ENCODE measurements at regions of chr6 and their contacts with region 1.

Region 1: DNA sequence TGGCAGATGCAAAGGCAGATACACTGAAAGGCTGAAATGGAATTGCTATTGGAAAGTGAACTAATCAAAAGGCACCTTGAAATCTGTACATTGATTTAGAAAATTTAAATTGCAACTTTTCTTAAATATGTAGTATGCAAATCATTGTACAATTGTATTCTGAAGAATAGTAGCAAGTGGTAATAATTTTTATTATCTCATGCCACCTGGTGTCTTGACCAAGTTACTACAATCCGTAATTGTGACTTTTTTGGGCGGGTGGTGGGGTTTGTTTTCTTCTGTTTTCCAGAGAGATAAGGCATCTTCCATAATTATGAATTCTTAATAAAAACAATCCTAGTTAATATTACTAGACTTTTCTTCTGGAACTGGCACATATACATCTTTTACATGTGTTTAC is 12.5 kb upstream of the BCKDHB start:
- DNase-seq: peak in 1 of 2 donors; percentile 57
- ATAC-seq: peak in 2 of 3 donors; percentile 65 to 70
- H3K4me3 ChIP-seq: no peak overlapping the region
- H3K4me3 Mint-ChIP-seq: no peak overlapping the region
- H3K27ac ChIP-seq: no peak overlapping the region
- H3K27ac Mint-ChIP-seq: no peak overlapping the region
- H3K4me1 ChIP-seq: no peaks in the 10 kb centered on the region
- H3K4me1 Mint-ChIP-seq: no peaks in the 10 kb centered on the region
- H3K27me3 ChIP-seq: no peaks in the 10 kb centered on the region
- H3K27me3 Mint-ChIP-seq: peaks cover 18 to 19% of the 10 kb centered on the region in 2 donors
- CTCF ChIP-seq: peak; percentile 76

Region 2: GRCh38 chr6:79949233-79949632 is 144.8 kb before region 1 on chr6:
- intact Hi-C with region 1: loop called (anchors 1 kb)
- DNase-seq: peak in 1 of 2 donors; percentile 89
- ATAC-seq: peak; percentile 46 to 53 (median 52)
- H3K4me3 ChIP-seq: no peak overlapping the region
- H3K4me3 Mint-ChIP-seq: no peak overlapping the region
- H3K27ac ChIP-seq: no peak overlapping the region
- H3K27ac Mint-ChIP-seq: no peak overlapping the region
- H3K4me1 ChIP-seq: peaks cover 13% of the 10 kb centered on the region
- H3K4me1 Mint-ChIP-seq: peaks cover 17 to 21% of the 10 kb centered on the region in 2 donors
- H3K27me3 ChIP-seq: peaks cover 21% of the 10 kb centered on the region
- H3K27me3 Mint-ChIP-seq: peaks cover 25 to 36% of the 10 kb centered on the region in 2 donors
- CTCF ChIP-seq: peak; percentile 70

Region 3: DNA sequence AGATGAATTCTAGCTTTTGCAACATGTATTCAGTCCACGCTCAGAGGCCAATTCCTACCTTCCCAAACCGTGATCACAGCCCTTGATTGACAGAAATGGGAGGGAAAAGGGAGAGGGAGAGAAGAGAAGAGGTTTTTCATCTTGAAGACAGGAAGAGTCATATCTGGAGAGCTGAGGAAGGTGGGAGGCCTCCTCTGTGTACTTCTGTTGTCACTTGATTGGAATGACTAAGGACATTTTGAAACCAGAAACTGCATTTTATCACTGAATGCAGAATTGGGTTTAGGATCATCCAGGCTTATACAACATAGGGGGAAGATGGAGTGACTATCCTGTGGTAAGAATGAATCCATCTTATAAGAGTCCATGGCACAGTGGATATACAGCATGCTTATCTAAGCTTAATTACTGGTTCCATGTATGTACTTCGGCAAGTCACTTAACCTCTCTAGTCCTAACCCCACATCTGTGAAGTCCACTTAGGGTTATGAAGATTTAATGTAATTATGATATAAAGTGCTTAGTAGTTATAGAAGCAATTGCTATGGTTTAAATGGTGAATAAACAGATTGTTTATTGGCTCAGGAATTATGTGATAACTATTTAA is 156.5 kb after region 1 on chr6:
- intact Hi-C with region 1: no loop called
- DNase-seq: no peak
- ATAC-seq: no peak
- H3K4me3 ChIP-seq: no peak overlapping the region
- H3K4me3 Mint-ChIP-seq: no peak overlapping the region
- H3K27ac ChIP-seq: no peak overlapping the region
- H3K27ac Mint-ChIP-seq: peak overlapping the region in 1 of 2 donors; percentile 27
- H3K4me1 ChIP-seq: no peaks in the 10 kb centered on the region
- H3K4me1 Mint-ChIP-seq: peaks cover 7 to 17% of the 10 kb centered on the region in 2 donors
- H3K27me3 ChIP-seq: no peaks in the 10 kb centered on the region
- H3K27me3 Mint-ChIP-seq: no peaks in the 10 kb centered on the region
- CTCF ChIP-seq: no peak